ENCODE measurements at regions of chr15 and their contacts with region 1.

Region 1: GRCh38 chr15:79989682-79990081 is 18.7 kb upstream of the BCL2A1 start:
- DNase-seq: no peak
- ATAC-seq: peak; percentile 29; the same call in 1 of the 3 replicates
- H3K4me3 ChIP-seq: no peak overlapping the region
- H3K27ac ChIP-seq: no peak overlapping the region
- H3K4me1 ChIP-seq: no peaks in the 10 kb centered on the region; a peak in 2 of 5 replicates
- H3K27me3 ChIP-seq: no peaks in the 10 kb centered on the region
- CTCF ChIP-seq: no peak
- EP300 ChIP-seq: no peak
- POLR2A ChIP-seq: no peak
- RAD21 ChIP-seq: no peak

Region 2: GRCh38 chr15:79380755-79381497 is 608.8 kb before region 1 on chr15:
- CTCF ChIA-PET with region 1: interaction called, 5 read pairs
- POLR2A ChIA-PET with region 1: no interaction called
- in situ Hi-C with region 1: no loop called
- intact Hi-C with region 1: loop called (anchors 10 kb)
- DNase-seq: peak; percentile 66 to 79 (median 69)
- ATAC-seq: peak; percentile 98
- H3K4me3 ChIP-seq: no peak overlapping the region
- H3K27ac ChIP-seq: no peak overlapping the region
- H3K4me1 ChIP-seq: peaks cover 0 to 6% of the 10 kb centered on the region in 2 experiments; a peak in 1 of 5 replicates
- H3K27me3 ChIP-seq: no peaks in the 10 kb centered on the region
- CTCF ChIP-seq: peak; percentile 83 to 88 (median 87)
- EP300 ChIP-seq: no peak
- POLR2A ChIP-seq: no peak
- RAD21 ChIP-seq: peak; percentile 66 to 87

Region 3: DNA sequence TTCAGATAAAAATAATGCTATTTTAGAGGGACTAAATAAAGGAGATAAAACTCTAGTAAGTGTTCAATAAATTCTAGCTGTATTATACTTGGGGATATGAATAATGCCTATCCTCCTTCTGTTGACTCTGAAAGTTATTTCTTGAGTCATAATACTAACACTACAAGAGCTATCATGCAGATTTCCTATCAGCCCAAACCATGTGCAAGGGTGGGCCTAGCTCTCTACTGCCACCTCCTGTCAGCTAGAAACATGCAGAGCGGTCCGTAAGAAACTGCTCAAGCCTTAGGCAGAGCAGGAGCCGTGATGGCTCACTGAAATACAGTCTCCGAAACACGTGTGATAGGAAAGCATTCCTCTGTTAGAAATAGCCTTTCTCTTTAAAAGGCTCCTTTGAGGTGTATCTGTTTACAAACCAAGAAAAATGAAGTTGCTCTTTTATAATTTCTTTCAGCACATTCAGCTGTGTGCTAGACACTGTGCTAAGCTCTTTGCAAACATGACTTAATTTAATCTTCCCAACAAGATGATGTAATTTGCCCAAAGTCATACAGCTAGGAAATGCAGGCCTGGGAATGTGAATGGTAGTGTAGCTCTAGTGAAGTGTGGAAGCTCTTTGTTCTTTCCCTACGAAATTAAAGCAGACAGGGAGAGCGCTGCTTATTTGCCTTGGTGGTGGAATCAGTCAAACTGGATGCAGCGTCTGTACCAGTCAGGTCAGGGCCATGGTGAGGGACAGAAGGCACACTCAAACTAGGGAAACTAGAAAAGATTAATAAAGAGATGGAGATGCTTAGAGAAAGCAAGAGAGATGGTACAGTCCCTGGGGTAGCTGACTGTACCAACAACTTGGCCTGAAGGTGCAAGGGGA is 136.0 kb before region 1 on chr15:
- CTCF ChIA-PET with region 1: no interaction called
- POLR2A ChIA-PET with region 1: no interaction called
- in situ Hi-C with region 1: no loop called
- intact Hi-C with region 1: loop called (anchors 2 kb)
- DNase-seq: peak; percentile 76 to 88 (median 83)
- ATAC-seq: peak; percentile 99
- H3K4me3 ChIP-seq: no peak overlapping the region
- H3K27ac ChIP-seq: no peak overlapping the region; the same call in 2 of the 3 replicates
- H3K4me1 ChIP-seq: peaks cover 0 to 4% of the 10 kb centered on the region in 2 experiments; a peak in 1 of 5 replicates
- H3K27me3 ChIP-seq: no peaks in the 10 kb centered on the region
- CTCF ChIP-seq: peak; percentile 84 to 96 (median 95)
- EP300 ChIP-seq: 0 out of 2 replicates have a peak, but pooled peaks have one; percentile 48
- POLR2A ChIP-seq: no peak
- RAD21 ChIP-seq: peak; percentile 68 to 76

Region 4: GRCh38 chr15:79901958-79902357 is 87.7 kb before region 1 on chr15:
- CTCF ChIA-PET with region 1: interaction called, 10 read pairs
- POLR2A ChIA-PET with region 1: no interaction called
- in situ Hi-C with region 1: loop called (anchors 5 kb)
- intact Hi-C with region 1: loop called (anchors 1 kb)
- DNase-seq: no peak
- ATAC-seq: no peak
- H3K4me3 ChIP-seq: no peak overlapping the region
- H3K27ac ChIP-seq: no peak overlapping the region
- H3K4me1 ChIP-seq: peaks cover 0 to 4% of the 10 kb centered on the region in 2 experiments
- H3K27me3 ChIP-seq: no peaks in the 10 kb centered on the region
- CTCF ChIP-seq: no peak
- EP300 ChIP-seq: no peak
- POLR2A ChIP-seq: no peak
- RAD21 ChIP-seq: no peak

Region 5: GRCh38 chr15:80173022-80173759 is 183.5 kb after region 1 on chr15:
- CTCF ChIA-PET with region 1: no interaction called
- POLR2A ChIA-PET with region 1: interaction called, 3 read pairs
- in situ Hi-C with region 1: no loop called
- intact Hi-C with region 1: loop called (anchors 2 kb)
- DNase-seq: peak; percentile 65 to 79 (median 72)
- ATAC-seq: peak; percentile 95
- H3K4me3 ChIP-seq: no peak overlapping the region
- H3K27ac ChIP-seq: no peak overlapping the region
- H3K4me1 ChIP-seq: peaks cover 0 to 3% of the 10 kb centered on the region in 2 experiments; a peak in 1 of 5 replicates
- H3K27me3 ChIP-seq: no peaks in the 10 kb centered on the region
- CTCF ChIP-seq: peak; percentile 84 to 88 (median 85)
- EP300 ChIP-seq: no peak
- POLR2A ChIP-seq: no peak
- RAD21 ChIP-seq: peak; percentile 88 to 93

Region 6: GRCh38 chr15:80214910-80215309 is 225.2 kb after region 1 on chr15:
- CTCF ChIA-PET with region 1: no interaction called
- POLR2A ChIA-PET with region 1: no interaction called
- in situ Hi-C with region 1: no loop called
- intact Hi-C with region 1: no loop called
- DNase-seq: no peak
- ATAC-seq: no peak
- H3K4me3 ChIP-seq: no peak overlapping the region
- H3K27ac ChIP-seq: no peak overlapping the region
- H3K4me1 ChIP-seq: no peaks in the 10 kb centered on the region
- H3K27me3 ChIP-seq: peaks cover 11 to 14% of the 10 kb centered on the region in 2 experiments; a peak in 3 of 5 replicates
- CTCF ChIP-seq: no peak
- EP300 ChIP-seq: no peak
- POLR2A ChIP-seq: no peak
- RAD21 ChIP-seq: no peak